ENCODE measurements at regions of chr11 and their contacts with region 1.

Region 1: GRCh38 chr11:68297812-68298658 is 14.4 kb upstream of the LRP5 start:
- DNase-seq: peak; percentile 48
- ATAC-seq: peak; percentile 100
- H3K4me3 ChIP-seq: no peak overlapping the region
- H3K27ac ChIP-seq: no peak overlapping the region
- H3K4me1 ChIP-seq: peaks cover 2% of the 10 kb centered on the region
- H3K27me3 ChIP-seq: peaks cover 2% of the 10 kb centered on the region; the same call in 1 of the 2 replicates
- CTCF ChIP-seq: peak; percentile 97
- POLR2A ChIP-seq: no peak
- RAD21 ChIP-seq: peak; percentile 96

Region 2: GRCh38 chr11:68076371-68077042 is 221.5 kb before region 1 on chr11:
- CTCF ChIA-PET with region 1: no interaction called
- POLR2A ChIA-PET with region 1: no interaction called
- dilution Hi-C with region 1: no loop called
- in situ Hi-C with region 1: no loop called
- intact Hi-C with region 1: no loop called
- DNase-seq: no peak
- ATAC-seq: no peak; the same call in 1 of the 2 replicates
- H3K4me3 ChIP-seq: no peak overlapping the region
- H3K27ac ChIP-seq: no peak overlapping the region
- H3K4me1 ChIP-seq: no peaks in the 10 kb centered on the region
- H3K27me3 ChIP-seq: no peaks in the 10 kb centered on the region
- CTCF ChIP-seq: peak; percentile 32
- POLR2A ChIP-seq: no peak
- RAD21 ChIP-seq: peak; percentile 29

Region 3: DNA sequence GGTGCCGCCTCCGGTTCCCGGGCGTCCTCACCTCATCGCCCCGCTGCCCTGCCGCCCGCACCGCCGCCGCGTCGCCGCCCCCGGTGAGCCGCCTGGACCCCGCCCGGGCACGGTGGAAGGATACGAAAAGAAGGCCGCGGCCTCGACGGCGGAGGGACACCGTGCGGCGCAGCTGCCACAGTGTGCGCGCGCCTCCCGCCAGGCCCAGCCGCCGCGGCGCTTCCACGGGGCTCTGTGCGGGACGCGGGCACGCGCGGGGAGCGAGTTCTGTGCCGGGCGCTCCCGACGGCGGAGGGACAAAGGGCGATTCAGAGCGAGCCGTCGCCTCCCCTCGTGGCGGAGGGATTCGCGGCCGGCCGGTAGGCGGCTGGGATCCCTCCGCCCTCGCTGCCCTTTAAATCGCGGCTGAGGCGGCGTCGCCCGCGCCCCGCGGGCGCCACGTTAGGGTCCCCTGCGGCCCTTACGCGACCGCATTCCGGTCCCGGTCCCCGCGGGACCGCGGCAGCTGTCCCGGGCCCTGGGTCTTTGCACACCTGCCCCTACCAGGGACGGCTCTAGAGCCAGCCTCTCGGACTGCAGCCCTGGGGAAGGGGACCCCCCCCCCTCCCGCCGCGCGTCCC is 84.4 kb before region 1 on chr11:
- CTCF ChIA-PET with region 1: no interaction called
- POLR2A ChIA-PET with region 1: no interaction called
- dilution Hi-C with region 1: no loop called
- in situ Hi-C with region 1: no loop called
- intact Hi-C with region 1: loop called (anchors 1 kb)
- DNase-seq: peak; percentile 96
- ATAC-seq: peak; percentile 53
- H3K4me3 ChIP-seq: peak overlapping the region; percentile 100
- H3K27ac ChIP-seq: peak overlapping the region; percentile 89
- H3K4me1 ChIP-seq: peaks cover 5% of the 10 kb centered on the region; the same call in 1 of the 2 replicates
- H3K27me3 ChIP-seq: peaks cover 22% of the 10 kb centered on the region
- CTCF ChIP-seq: no peak
- POLR2A ChIP-seq: peak; percentile 93
- RAD21 ChIP-seq: no peak

Region 4: GRCh38 chr11:68257475-68258362 is 40.3 kb before region 1 on chr11:
- CTCF ChIA-PET with region 1: interaction called, 3 read pairs
- POLR2A ChIA-PET with region 1: interaction called, 3 read pairs
- dilution Hi-C with region 1: no loop called
- in situ Hi-C with region 1: loop called (anchors 5 kb)
- intact Hi-C with region 1: loop called (anchors 1 kb)
- DNase-seq: peak; percentile 83
- ATAC-seq: peak; percentile 74
- H3K4me3 ChIP-seq: no peak overlapping the region
- H3K27ac ChIP-seq: no peak overlapping the region
- H3K4me1 ChIP-seq: peaks cover 11% of the 10 kb centered on the region
- H3K27me3 ChIP-seq: no peaks in the 10 kb centered on the region
- CTCF ChIP-seq: peak; percentile 85
- POLR2A ChIP-seq: no peak
- RAD21 ChIP-seq: peak; percentile 82

Region 5: GRCh38 chr11:68271781-68272608 is 26.0 kb before region 1 on chr11 and contains the start of gene C11orf24:
- CTCF ChIA-PET with region 1: interaction called, 3 read pairs
- POLR2A ChIA-PET with region 1: no interaction called
- dilution Hi-C with region 1: no loop called
- in situ Hi-C with region 1: no loop called
- intact Hi-C with region 1: loop called (anchors 1 kb)
- DNase-seq: peak; percentile 91
- ATAC-seq: peak; percentile 91
- H3K4me3 ChIP-seq: peak within 1 kb of the TSS; percentile 94
- H3K27ac ChIP-seq: peak within 1 kb of the TSS; percentile 97
- H3K4me1 ChIP-seq: peaks cover 10% of the 10 kb centered on the region
- H3K27me3 ChIP-seq: no peaks in the 10 kb centered on the region
- CTCF ChIP-seq: no peak
- POLR2A ChIP-seq: peak; percentile 96
- RAD21 ChIP-seq: no peak
- total RNA-seq, gene C11orf24: 41.1 and 42.5 TPM in 2 replicates

Region 6: GRCh38 chr11:68503251-68503687 is 205.2 kb after region 1 on chr11:
- CTCF ChIA-PET with region 1: no interaction called
- POLR2A ChIA-PET with region 1: no interaction called
- dilution Hi-C with region 1: no loop called
- in situ Hi-C with region 1: no loop called
- intact Hi-C with region 1: no loop called
- DNase-seq: peak; percentile 36
- ATAC-seq: no peak
- H3K4me3 ChIP-seq: no peak overlapping the region
- H3K27ac ChIP-seq: no peak overlapping the region
- H3K4me1 ChIP-seq: peaks cover 12% of the 10 kb centered on the region
- H3K27me3 ChIP-seq: no peaks in the 10 kb centered on the region
- CTCF ChIP-seq: no peak
- POLR2A ChIP-seq: no peak
- RAD21 ChIP-seq: no peak

Measured in IMR-90 (cell line).